ENCODE measurements at regions of chr11 and their contacts with region 1.

Region 1: DNA sequence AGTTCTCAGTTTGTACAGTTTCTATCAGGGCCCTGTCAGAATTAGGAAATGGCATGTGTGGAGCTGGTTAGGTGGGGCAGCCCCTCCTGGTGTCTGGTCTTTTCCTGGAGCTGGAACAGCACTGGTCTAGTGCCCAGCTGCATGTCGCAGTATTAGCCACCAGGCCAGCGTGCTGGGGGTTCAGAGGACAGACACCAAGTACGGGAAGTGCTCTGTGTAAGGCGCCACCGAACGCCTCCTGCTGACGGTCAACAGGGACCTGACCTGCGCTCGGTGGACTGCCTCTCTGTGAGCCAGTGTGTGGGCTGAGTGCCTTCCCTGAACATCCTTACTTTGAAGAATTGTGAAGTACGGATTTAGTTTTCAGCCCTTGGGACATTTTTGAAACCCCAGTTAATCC is 33.9 kb downstream of the AP2A2 start:
- DNase-seq: peak; percentile 63
- ATAC-seq: peak; percentile 90
- H3K4me3 ChIP-seq: no peak overlapping the region
- H3K27ac ChIP-seq: no peak overlapping the region
- H3K4me1 ChIP-seq: peaks cover 37% of the 10 kb centered on the region
- H3K27me3 ChIP-seq: no peaks in the 10 kb centered on the region
- CTCF ChIP-seq: peak; percentile 52
- EP300 ChIP-seq: no peak
- POLR2A ChIP-seq: no peak
- RAD21 ChIP-seq: no peak

Region 2: DNA sequence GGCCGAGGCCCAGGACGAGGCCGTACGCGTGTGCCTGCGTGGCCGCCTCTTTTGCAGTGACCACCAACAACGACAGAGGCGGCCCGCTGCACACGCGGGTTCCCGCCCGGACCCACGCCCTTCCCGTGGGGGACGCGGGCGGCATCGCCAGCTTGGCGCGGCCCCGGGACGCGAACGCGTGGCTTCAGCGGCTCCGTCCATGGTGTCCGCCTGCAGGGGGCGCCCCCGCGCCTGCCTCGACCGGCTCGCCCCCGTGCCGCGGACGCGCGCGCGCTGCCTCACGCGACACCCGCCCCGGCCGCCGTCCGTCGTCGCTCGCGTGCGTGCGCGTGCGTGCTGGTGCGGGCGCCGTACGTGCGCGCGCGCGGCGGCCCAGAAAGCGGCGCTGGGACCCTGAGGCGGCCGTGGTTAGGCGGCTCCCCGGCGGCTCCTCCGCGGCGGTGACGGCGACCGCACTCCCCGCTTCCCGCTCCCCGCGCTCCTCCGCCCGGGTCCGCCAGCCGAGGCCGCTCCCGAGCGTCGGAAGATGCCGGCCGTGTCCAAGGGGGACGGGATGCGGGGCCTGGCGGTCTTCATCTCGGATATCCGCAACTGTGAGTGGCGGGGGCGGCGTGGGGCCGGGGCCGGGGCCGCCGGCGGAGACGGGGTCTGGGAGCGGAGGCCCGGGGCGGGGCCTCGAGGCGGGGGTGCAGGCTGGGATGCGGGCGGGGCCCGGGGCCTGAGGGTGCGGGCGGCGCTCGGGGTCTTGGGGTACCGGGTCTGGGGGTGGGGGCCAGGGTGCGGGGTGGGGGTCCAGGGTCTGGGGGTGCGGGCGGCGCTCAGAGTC is 33.9 kb before region 1 on chr11 and contains the start of gene AP2A2:
- CTCF ChIA-PET with region 1: no interaction called
- POLR2A ChIA-PET with region 1: interaction called, 4 read pairs
- in situ Hi-C with region 1: no loop called
- intact Hi-C with region 1: loop called (anchors 1 kb)
- DNase-seq: peak; percentile 58
- ATAC-seq: peak; percentile 11
- H3K4me3 ChIP-seq: peak within 1 kb of the TSS; percentile 75 to 84 (median 79)
- H3K27ac ChIP-seq: peak within 1 kb of the TSS; percentile 71
- H3K4me1 ChIP-seq: peaks cover 83% of the 10 kb centered on the region
- H3K27me3 ChIP-seq: no peaks in the 10 kb centered on the region; a peak in 1 of 5 replicates
- CTCF ChIP-seq: peak; percentile 75
- EP300 ChIP-seq: no peak
- POLR2A ChIP-seq: 0 out of 4 replicates have a peak, but pooled peaks of 1 of the 2 experiments have one; percentile 8
- RAD21 ChIP-seq: peak; percentile 91
- total RNA-seq, gene AP2A2: 25.7 and 25.9 TPM in 2 replicates